Esophagus muscularis mucosa (tissue), 4 donors: ENCODE measurements at regions of chr6 and their contacts with region 1.

Region 1: GRCh38 chr6:36027501-36028087 is at the start of gene MAPK14:
- DNase-seq: peak; percentile 100
- H3K4me3 ChIP-seq: peak within 1 kb of the TSS; percentile 83 to 96 (median 95)
- H3K27ac ChIP-seq: peak within 1 kb of the TSS; percentile 92 to 96 (median 94)
- H3K4me1 ChIP-seq: peaks cover 13 to 44% (median 41%) of the 10 kb centered on the region in 4 donors
- H3K27me3 ChIP-seq: peaks cover 0 to 13% (median 5%) of the 10 kb centered on the region in 4 donors
- CTCF ChIP-seq: peak; percentile 91 to 99 (median 95)
- EP300 ChIP-seq: no peak
- POLR2A ChIP-seq: peak; percentile 92
- total RNA-seq, gene MAPK14: 53.2 to 70.7 (median 66.9) TPM

Region 2: DNA sequence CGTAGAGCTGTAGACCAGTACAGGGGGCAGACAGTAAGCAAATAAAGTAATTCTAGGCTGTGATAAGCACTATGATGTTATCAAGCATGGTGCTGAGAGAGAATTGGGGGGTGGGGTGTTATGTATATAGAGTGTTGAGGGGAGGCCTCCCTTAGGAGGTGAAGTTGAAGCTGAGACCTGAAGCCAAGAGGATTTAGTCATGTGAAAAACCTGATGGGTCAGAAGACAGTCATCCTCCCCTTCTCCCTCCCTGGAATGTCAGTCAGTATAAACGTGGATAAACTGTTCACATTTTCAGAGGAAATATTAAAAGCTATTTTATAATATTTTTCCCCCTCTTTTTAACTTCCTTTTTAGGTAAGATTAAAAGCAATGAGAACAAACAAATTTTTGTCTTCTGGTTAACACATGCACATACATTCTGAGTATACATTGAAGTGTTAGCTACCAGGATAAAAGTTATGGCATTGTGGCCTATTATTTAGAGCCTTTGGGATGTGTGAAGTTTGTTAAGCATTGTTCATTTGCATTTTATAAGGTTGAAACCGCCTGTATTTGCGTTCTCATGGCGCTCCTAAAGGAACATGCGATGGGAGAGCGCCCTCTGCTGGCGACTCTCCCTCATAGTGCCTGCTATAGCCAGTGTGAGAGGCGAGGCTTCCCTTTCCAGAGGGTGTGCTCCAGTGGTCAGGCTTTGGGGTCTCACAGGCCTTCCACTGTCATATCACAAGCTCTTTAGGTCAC is 67.3 kb after region 1 on chr6:
- intact Hi-C with region 1: loop called (anchors 1 kb)
- DNase-seq: peak; percentile 96
- H3K4me3 ChIP-seq: no peak overlapping the region
- H3K27ac ChIP-seq: peak overlapping the region; percentile 3 to 69 (median 36)
- H3K4me1 ChIP-seq: peaks cover 17 to 31% (median 30%) of the 10 kb centered on the region in 4 donors
- H3K27me3 ChIP-seq: no peaks in the 10 kb centered on the region
- CTCF ChIP-seq: peak; percentile 96 to 97 (median 96)
- EP300 ChIP-seq: no peak
- POLR2A ChIP-seq: no peak